Activated naive CD4-positive, alpha-beta T cell treated with anti-CD3 and anti-CD28 coated beads for 36 hours (primary cell): ENCODE measurements at regions of chr2 and their contacts with region 1.

Region 1: GRCh38 chr2:72150157-72150865 is 2.6 kb upstream of the CYP26B1 start:
- DNase-seq: peak; percentile 78
- H3K4me3 Mint-ChIP-seq: peak overlapping the region; percentile 77
- H3K27ac Mint-ChIP-seq: no peak overlapping the region
- H3K4me1 Mint-ChIP-seq: peaks cover 38% of the 10 kb centered on the region
- H3K27me3 Mint-ChIP-seq: peaks cover 60% of the 10 kb centered on the region

Region 2: GRCh38 chr2:71609958-71610357 is 540.4 kb before region 1 on chr2:
- CTCF ChIA-PET with region 1: interaction called, 3 read pairs
- intact Hi-C with region 1: loop called (anchors 1 kb)
- DNase-seq: no peak
- H3K4me3 Mint-ChIP-seq: no peak overlapping the region
- H3K27ac Mint-ChIP-seq: no peak overlapping the region
- H3K4me1 Mint-ChIP-seq: peaks cover 3% of the 10 kb centered on the region
- H3K27me3 Mint-ChIP-seq: peaks cover 9% of the 10 kb centered on the region

Region 3: GRCh38 chr2:71798266-71799012 is 351.9 kb before region 1 on chr2:
- CTCF ChIA-PET with region 1: interaction called, 3 read pairs
- intact Hi-C with region 1: loop called (anchors 5 kb)
- DNase-seq: peak; percentile 18
- H3K4me3 Mint-ChIP-seq: no peak overlapping the region
- H3K27ac Mint-ChIP-seq: no peak overlapping the region
- H3K4me1 Mint-ChIP-seq: no peaks in the 10 kb centered on the region
- H3K27me3 Mint-ChIP-seq: peaks cover 4% of the 10 kb centered on the region

Region 4: GRCh38 chr2:71923887-71924533 is 226.3 kb before region 1 on chr2:
- CTCF ChIA-PET with region 1: interaction called, 33 read pairs
- intact Hi-C with region 1: loop called (anchors 1 kb)
- DNase-seq: peak; percentile 75
- H3K4me3 Mint-ChIP-seq: no peak overlapping the region
- H3K27ac Mint-ChIP-seq: no peak overlapping the region
- H3K4me1 Mint-ChIP-seq: no peaks in the 10 kb centered on the region
- H3K27me3 Mint-ChIP-seq: no peaks in the 10 kb centered on the region

Region 5: GRCh38 chr2:72579591-72580180 is 429.4 kb after region 1 on chr2:
- CTCF ChIA-PET with region 1: interaction called, 9 read pairs
- intact Hi-C with region 1: loop called (anchors 1 kb)
- DNase-seq: no peak
- H3K4me3 Mint-ChIP-seq: no peak overlapping the region
- H3K27ac Mint-ChIP-seq: no peak overlapping the region
- H3K4me1 Mint-ChIP-seq: no peaks in the 10 kb centered on the region
- H3K27me3 Mint-ChIP-seq: no peaks in the 10 kb centered on the region

Region 6: DNA sequence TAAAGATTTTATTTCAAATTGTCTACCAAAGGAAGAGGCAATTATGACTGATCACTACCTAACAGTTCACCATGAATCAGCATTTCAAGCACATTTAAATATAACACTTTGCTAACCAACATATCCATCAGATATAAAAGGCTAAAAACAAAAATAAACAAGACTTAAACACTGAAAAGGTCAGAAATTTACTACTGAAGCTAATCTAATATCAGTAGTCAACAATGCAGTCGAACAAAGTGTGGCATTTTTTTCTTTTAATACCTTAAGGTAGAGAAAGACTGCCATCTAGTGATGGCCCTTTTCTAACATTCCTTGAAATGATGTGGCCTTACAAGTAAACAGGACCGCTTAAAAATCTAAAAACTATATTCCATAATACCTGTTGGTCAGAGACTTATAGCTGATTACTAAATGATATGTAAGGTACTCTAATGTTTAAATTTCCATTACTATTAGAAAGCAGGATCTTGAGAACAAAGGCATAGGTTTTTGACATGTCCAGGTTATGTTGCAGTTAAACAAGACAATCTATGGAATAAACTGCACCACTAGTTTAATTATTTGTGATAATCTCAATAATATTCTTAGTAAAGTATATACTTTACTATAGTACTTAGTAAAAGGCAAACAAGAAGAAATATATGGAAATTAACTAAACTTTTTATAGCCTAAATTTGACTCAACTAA is 595.5 kb after region 1 on chr2:
- CTCF ChIA-PET with region 1: interaction called, 4 read pairs
- intact Hi-C with region 1: loop called (anchors 1 kb)
- DNase-seq: no peak
- H3K4me3 Mint-ChIP-seq: no peak overlapping the region
- H3K27ac Mint-ChIP-seq: no peak overlapping the region
- H3K4me1 Mint-ChIP-seq: peaks cover 2% of the 10 kb centered on the region
- H3K27me3 Mint-ChIP-seq: no peaks in the 10 kb centered on the region

Region 7: GRCh38 chr2:72915907-72916742 is 765.8 kb after region 1 on chr2:
- CTCF ChIA-PET with region 1: no interaction called
- intact Hi-C with region 1: loop called (anchors 5 kb)
- DNase-seq: peak; percentile 53
- H3K4me3 Mint-ChIP-seq: peak overlapping the region; percentile 71
- H3K27ac Mint-ChIP-seq: no peak overlapping the region
- H3K4me1 Mint-ChIP-seq: peaks cover 30% of the 10 kb centered on the region
- H3K27me3 Mint-ChIP-seq: peaks cover 70% of the 10 kb centered on the region